ENCODE measurements at regions of chr11 and their contacts with region 1.

Region 1: GRCh38 chr11:56783448-56784041 is 35.0 kb upstream of the OR9G4 start:
- DNase-seq: peak; percentile 52
- ATAC-seq: no peak
- H3K4me3 ChIP-seq: no peak overlapping the region
- H3K27ac ChIP-seq: no peak overlapping the region
- H3K4me1 ChIP-seq: no peaks in the 10 kb centered on the region
- H3K27me3 ChIP-seq: no peaks in the 10 kb centered on the region
- CTCF ChIP-seq: peak; percentile 23 to 63 (median 39); a peak in 4 of 6 replicates
- POLR2A ChIP-seq: no peak
- RAD21 ChIP-seq: peak; percentile 49

Region 2: DNA sequence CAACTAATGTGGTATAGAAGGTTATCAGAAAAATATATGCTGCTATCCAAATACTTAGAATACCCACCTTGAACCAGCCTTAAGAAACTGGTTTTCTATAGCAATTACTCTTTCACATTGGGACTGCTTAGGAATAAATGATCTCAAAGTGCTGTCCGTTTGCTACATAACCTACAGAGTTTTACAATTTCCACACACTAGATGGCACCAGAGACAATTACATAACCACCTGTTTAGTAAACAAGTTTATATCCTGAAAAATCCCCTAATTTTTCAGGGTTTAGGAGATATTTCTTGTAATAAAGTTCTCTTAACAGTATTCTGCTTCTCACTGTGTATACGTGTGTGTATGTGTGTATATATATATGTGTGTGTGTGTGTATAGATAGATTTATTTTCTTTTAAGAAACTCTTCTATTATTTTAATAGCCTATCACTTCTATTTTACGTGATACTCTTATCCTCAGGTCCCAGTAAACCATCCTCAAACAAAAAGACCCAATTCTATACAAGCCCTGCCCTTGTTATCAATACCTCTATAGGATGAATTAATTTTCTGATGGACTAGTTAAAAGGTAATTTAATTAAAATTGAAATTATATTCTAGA is 840.7 kb before region 1 on chr11:
- CTCF ChIA-PET with region 1: no interaction called
- POLR2A ChIA-PET with region 1: no interaction called
- RAD21 ChIA-PET with region 1: no interaction called
- intact Hi-C with region 1: loop called (anchors 2 kb)
- DNase-seq: peak; percentile 18
- ATAC-seq: no peak
- H3K4me3 ChIP-seq: no peak overlapping the region
- H3K27ac ChIP-seq: no peak overlapping the region
- H3K4me1 ChIP-seq: no peaks in the 10 kb centered on the region
- H3K27me3 ChIP-seq: no peaks in the 10 kb centered on the region
- CTCF ChIP-seq: peak in 2 of 3 experiments; percentile 29 to 49; a peak in 3 of 6 replicates
- POLR2A ChIP-seq: no peak
- RAD21 ChIP-seq: no peak

Region 3: GRCh38 chr11:56876621-56877275 is 93.2 kb after region 1 on chr11:
- CTCF ChIA-PET with region 1: no interaction called
- POLR2A ChIA-PET with region 1: no interaction called
- RAD21 ChIA-PET with region 1: no interaction called
- intact Hi-C with region 1: no loop called
- DNase-seq: no peak
- ATAC-seq: no peak
- H3K4me3 ChIP-seq: no peak overlapping the region
- H3K27ac ChIP-seq: no peak overlapping the region
- H3K4me1 ChIP-seq: no peaks in the 10 kb centered on the region
- H3K27me3 ChIP-seq: no peaks in the 10 kb centered on the region
- CTCF ChIP-seq: no peak
- POLR2A ChIP-seq: no peak
- RAD21 ChIP-seq: no peak

Region 4: GRCh38 chr11:56967726-56968125 is 184.2 kb after region 1 on chr11:
- CTCF ChIA-PET with region 1: no interaction called
- POLR2A ChIA-PET with region 1: no interaction called
- RAD21 ChIA-PET with region 1: no interaction called
- intact Hi-C with region 1: no loop called
- DNase-seq: no peak
- ATAC-seq: no peak
- H3K4me3 ChIP-seq: no peak overlapping the region
- H3K27ac ChIP-seq: no peak overlapping the region
- H3K4me1 ChIP-seq: no peaks in the 10 kb centered on the region
- H3K27me3 ChIP-seq: no peaks in the 10 kb centered on the region
- CTCF ChIP-seq: no peak
- POLR2A ChIP-seq: no peak
- RAD21 ChIP-seq: no peak

Measured in HCT116 (cell line).